Naive thymus-derived CD4-positive, alpha-beta T cell (primary cell): ENCODE measurements at regions of chr11 and their contacts with region 1.

Region 1: DNA sequence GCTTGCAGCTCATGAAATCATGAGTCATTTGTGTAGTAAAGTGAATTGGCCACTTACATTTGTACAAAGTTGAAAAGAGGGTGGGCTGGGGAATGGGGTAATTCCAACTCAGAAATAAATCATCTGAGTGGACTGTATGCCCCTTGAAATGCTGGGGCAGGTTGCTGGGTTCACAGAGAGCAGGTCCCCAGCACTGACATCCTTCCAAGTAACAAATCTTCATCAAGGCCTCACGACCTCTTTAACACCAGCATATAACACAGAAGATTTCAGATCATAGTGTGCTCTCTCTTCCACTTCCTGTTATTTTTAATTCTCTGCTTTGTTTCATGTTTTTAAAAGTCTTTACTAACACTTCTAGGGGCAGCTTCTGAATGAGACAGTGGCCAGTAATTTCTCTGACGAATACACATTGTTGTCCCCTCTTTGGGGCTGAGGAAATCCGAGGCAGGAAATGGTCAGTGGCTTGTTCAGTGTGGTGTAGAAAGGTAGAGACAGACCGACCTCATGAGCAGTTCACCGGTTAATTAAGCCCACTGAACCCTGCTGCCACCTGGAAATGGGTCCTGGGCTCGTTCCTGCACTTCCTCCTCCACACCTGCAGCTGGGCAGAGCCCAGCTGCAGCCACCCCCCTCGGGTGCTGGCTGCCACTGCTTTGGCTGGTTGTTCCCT is 127.7 kb downstream of the MAML2 start:
- DNase-seq: peak in 7 of 9 donors; percentile 25 to 67 (median 62)
- ATAC-seq: peak; percentile 78
- H3K4me3 ChIP-seq: peak overlapping the region; percentile 47
- H3K4me3 Mint-ChIP-seq: peak overlapping the region; percentile 64 to 80 (median 75)
- H3K27ac ChIP-seq: peak overlapping the region; percentile 75
- H3K27ac Mint-ChIP-seq: peak overlapping the region; percentile 89 to 99 (median 96)
- H3K4me1 ChIP-seq: peaks cover 73 to 96% of the 10 kb centered on the region in 2 donors
- H3K4me1 Mint-ChIP-seq: peaks cover 54 to 100% (median 91%) of the 10 kb centered on the region in 7 donors
- H3K27me3 ChIP-seq: no peaks in the 10 kb centered on the region
- H3K27me3 Mint-ChIP-seq: no peaks in the 10 kb centered on the region

Region 2: DNA sequence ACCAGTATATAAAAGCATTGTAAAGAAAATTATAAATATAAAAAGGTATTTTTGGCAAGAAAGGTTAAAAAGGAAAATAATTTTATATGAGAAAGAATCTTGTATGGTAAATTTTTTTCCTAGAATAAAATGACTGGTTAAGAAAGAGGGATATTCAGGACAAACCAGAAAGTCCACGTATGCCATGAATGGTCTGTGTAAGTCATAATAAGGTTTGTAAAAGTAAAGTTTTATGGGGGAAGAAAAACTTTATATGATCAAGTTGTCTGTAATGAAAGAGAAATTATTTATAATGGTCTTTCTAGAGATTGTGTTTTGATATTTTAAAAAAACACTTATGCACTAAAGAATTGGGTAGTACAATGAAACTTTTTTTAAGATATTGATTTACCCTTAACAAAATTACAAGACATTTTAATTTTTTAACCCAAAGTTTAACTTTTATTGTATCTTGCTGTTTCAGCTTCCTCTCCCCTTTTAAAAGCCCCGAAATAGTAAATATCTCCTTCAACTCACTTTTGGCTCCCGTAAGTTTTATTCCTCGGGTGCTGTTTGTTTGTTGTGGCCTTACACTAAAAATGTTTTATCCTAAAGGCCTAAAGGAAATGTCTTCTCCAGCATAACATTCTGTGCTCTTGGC is 1399.4 kb before region 1 on chr11:
- CTCF ChIA-PET with region 1: no interaction called
- POLR2A ChIA-PET with region 1: no interaction called
- intact Hi-C with region 1: no loop called
- DNase-seq: no peak
- ATAC-seq: no peak
- H3K4me3 ChIP-seq: no peak overlapping the region
- H3K4me3 Mint-ChIP-seq: no peak overlapping the region
- H3K27ac ChIP-seq: no peak overlapping the region
- H3K27ac Mint-ChIP-seq: no peak overlapping the region
- H3K4me1 ChIP-seq: no peaks in the 10 kb centered on the region
- H3K4me1 Mint-ChIP-seq: no peaks in the 10 kb centered on the region
- H3K27me3 ChIP-seq: no peaks in the 10 kb centered on the region
- H3K27me3 Mint-ChIP-seq: peaks cover 0 to 7% (median 0%) of the 10 kb centered on the region in 5 donors

Region 3: GRCh38 chr11:96001037-96001436 is 214.2 kb before region 1 on chr11:
- CTCF ChIA-PET with region 1: no interaction called
- POLR2A ChIA-PET with region 1: no interaction called
- intact Hi-C with region 1: no loop called
- DNase-seq: no peak
- ATAC-seq: no peak
- H3K4me3 ChIP-seq: no peak overlapping the region
- H3K4me3 Mint-ChIP-seq: peak overlapping the region in 1 of 10 donors; percentile 45
- H3K27ac ChIP-seq: no peak overlapping the region
- H3K27ac Mint-ChIP-seq: peak overlapping the region in 3 of 9 donors; percentile 1 to 73 (median 25)
- H3K4me1 ChIP-seq: no peaks in the 10 kb centered on the region
- H3K4me1 Mint-ChIP-seq: peaks cover 13 to 84% (median 51%) of the 10 kb centered on the region in 7 donors
- H3K27me3 ChIP-seq: no peaks in the 10 kb centered on the region
- H3K27me3 Mint-ChIP-seq: no peaks in the 10 kb centered on the region

Region 4: DNA sequence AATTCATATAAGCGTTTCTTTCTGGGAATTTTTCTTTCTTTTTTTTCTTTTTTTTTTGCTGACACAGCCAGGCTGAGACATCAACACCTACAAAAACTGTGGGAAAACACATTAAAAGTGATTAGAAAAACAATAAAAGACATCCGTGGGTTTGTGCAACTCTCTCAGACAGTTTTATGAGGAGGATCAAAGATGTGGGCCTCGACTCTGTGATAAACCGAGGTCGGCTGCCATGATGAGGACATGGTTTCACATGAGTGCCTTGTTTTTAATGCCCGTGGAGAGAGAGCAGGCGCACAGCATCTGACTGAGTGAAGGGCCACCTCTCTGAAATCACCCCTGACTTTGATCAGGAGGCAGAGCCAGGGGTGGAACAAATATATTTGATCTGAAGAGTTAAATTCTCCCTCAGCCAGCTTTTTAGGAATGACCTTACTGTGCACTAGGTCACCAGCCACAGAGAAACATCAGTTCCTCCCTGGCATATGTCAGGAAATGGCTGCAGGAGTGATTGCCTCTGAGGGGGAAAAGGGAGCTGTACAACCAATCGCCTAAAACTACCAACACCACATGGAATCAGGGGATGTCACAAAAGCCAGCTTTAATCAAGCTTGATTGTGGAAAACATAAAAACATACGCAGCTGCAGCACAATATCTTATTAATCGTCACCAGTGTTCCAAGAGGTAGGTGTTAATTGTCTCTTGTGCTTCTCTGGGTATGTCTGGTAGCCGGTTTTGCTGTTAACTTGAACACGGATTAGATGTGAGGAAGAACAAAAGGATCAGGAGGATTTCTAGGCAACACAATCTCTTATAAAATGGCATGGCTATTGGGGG is 37.0 kb before region 1 on chr11:
- CTCF ChIA-PET with region 1: no interaction called
- POLR2A ChIA-PET with region 1: no interaction called
- intact Hi-C with region 1: no loop called
- DNase-seq: no peak
- ATAC-seq: no peak
- H3K4me3 ChIP-seq: no peak overlapping the region
- H3K4me3 Mint-ChIP-seq: peak overlapping the region in 7 of 10 donors; percentile 31 to 64 (median 48)
- H3K27ac ChIP-seq: no peak overlapping the region
- H3K27ac Mint-ChIP-seq: peak overlapping the region in 8 of 9 donors; percentile 70 to 87 (median 77)
- H3K4me1 ChIP-seq: peaks cover 3 to 15% of the 10 kb centered on the region in 2 donors
- H3K4me1 Mint-ChIP-seq: peaks cover 27 to 100% (median 97%) of the 10 kb centered on the region in 7 donors
- H3K27me3 ChIP-seq: no peaks in the 10 kb centered on the region
- H3K27me3 Mint-ChIP-seq: no peaks in the 10 kb centered on the region

Region 5: DNA sequence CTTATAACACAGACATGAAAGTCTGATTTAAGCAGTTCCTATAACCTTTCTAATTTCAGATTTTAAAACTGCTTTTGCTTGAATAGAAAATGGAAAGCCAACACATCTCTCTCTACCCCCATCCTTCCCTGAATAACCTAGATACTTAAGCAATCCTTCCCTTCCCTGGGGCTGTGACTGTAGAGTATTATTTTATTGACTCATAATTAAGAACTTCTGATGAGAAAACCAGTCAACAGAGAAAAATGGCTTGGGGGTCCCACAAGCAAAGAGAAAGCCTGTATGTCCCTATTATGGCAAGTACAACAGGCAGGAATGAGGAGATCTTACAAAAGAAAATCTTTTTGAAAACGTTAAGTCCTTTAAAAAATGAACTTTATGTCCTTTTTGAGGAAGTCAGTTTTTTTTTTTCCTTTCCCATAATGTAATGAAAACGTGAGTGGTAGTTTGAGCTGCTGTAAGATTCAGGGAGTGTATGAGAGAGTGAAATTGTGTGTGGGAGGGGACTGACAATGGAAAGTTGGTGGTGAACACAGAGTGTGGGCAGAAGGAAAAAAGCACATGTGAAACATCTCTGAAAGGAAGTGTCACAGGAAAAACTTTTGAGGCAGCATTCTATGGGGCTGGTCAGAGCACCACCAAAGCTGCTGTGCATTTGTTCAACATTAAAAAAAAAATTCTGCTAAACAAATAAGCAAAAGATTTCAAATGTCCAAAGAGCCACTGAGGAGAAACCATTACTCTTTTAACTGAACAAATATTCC is 26.8 kb before region 1 on chr11:
- CTCF ChIA-PET with region 1: no interaction called
- POLR2A ChIA-PET with region 1: interaction called, 14 read pairs
- intact Hi-C with region 1: loop called in 1 of 2 experiments (anchors 2 kb)
- DNase-seq: peak in 2 of 9 donors; percentile 17 to 57
- ATAC-seq: peak; percentile 38
- H3K4me3 ChIP-seq: no peak overlapping the region
- H3K4me3 Mint-ChIP-seq: peak overlapping the region; percentile 42 to 79 (median 72)
- H3K27ac ChIP-seq: peak overlapping the region; percentile 15
- H3K27ac Mint-ChIP-seq: peak overlapping the region; percentile 21 to 90 (median 79)
- H3K4me1 ChIP-seq: peaks cover 9 to 50% of the 10 kb centered on the region in 2 donors
- H3K4me1 Mint-ChIP-seq: peaks cover 35 to 92% (median 88%) of the 10 kb centered on the region in 7 donors
- H3K27me3 ChIP-seq: no peaks in the 10 kb centered on the region
- H3K27me3 Mint-ChIP-seq: no peaks in the 10 kb centered on the region

Region 6: DNA sequence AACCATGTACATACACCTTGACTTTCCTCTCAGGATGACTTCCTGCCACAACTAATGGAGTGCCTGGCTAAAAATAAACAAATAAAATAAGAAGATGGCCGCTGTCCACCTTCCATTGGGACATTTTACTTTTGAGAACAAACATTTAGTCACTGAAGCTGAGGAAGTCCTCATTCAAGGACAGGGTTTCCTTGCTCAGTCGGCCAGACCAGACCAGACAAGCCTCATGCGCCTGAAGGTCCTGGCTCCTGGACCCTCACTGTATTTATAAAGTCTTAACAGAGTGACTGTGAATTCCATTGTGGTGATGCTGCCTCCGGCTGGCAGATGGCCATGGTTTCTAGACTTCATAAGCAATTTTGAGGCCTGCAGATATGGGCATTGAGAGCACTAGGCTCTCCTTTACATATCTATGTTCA is 13.2 kb after region 1 on chr11:
- CTCF ChIA-PET with region 1: interaction called, 4 read pairs
- POLR2A ChIA-PET with region 1: interaction called, 7 read pairs
- intact Hi-C with region 1: loop called in 1 of 2 experiments (anchors 1 kb)
- DNase-seq: no peak
- ATAC-seq: no peak
- H3K4me3 ChIP-seq: no peak overlapping the region
- H3K4me3 Mint-ChIP-seq: peak overlapping the region in 7 of 10 donors; percentile 13 to 83 (median 57)
- H3K27ac ChIP-seq: peak overlapping the region; percentile 43
- H3K27ac Mint-ChIP-seq: peak overlapping the region in 7 of 9 donors; percentile 63 to 92 (median 87)
- H3K4me1 ChIP-seq: peaks cover 0 to 42% of the 10 kb centered on the region in 2 donors
- H3K4me1 Mint-ChIP-seq: peaks cover 43 to 96% (median 85%) of the 10 kb centered on the region in 7 donors
- H3K27me3 ChIP-seq: no peaks in the 10 kb centered on the region
- H3K27me3 Mint-ChIP-seq: no peaks in the 10 kb centered on the region

Region 7: GRCh38 chr11:96242971-96243647 is 27.9 kb after region 1 on chr11:
- CTCF ChIA-PET with region 1: interaction called, 3 read pairs
- POLR2A ChIA-PET with region 1: interaction called, 16 read pairs
- intact Hi-C with region 1: no loop called
- DNase-seq: peak; percentile 47 to 83 (median 66)
- ATAC-seq: peak; percentile 92
- H3K4me3 ChIP-seq: peak overlapping the region; percentile 63
- H3K4me3 Mint-ChIP-seq: peak overlapping the region; percentile 76 to 89 (median 84)
- H3K27ac ChIP-seq: peak overlapping the region; percentile 72
- H3K27ac Mint-ChIP-seq: peak overlapping the region; percentile 86 to 94 (median 92)
- H3K4me1 ChIP-seq: peaks cover 8 to 61% of the 10 kb centered on the region in 2 donors
- H3K4me1 Mint-ChIP-seq: peaks cover 37 to 72% (median 63%) of the 10 kb centered on the region in 7 donors
- H3K27me3 ChIP-seq: no peaks in the 10 kb centered on the region
- H3K27me3 Mint-ChIP-seq: no peaks in the 10 kb centered on the region

Region 8: GRCh38 chr11:96272529-96273222 is 57.4 kb after region 1 on chr11:
- CTCF ChIA-PET with region 1: no interaction called
- POLR2A ChIA-PET with region 1: no interaction called
- intact Hi-C with region 1: no loop called
- DNase-seq: peak in 7 of 9 donors; percentile 37 to 74 (median 65)
- ATAC-seq: peak; percentile 87
- H3K4me3 ChIP-seq: no peak overlapping the region
- H3K4me3 Mint-ChIP-seq: peak overlapping the region in 3 of 10 donors; percentile 6 to 60 (median 24)
- H3K27ac ChIP-seq: peak overlapping the region; percentile 69
- H3K27ac Mint-ChIP-seq: peak overlapping the region in 8 of 9 donors; percentile 66 to 100 (median 90)
- H3K4me1 ChIP-seq: peaks cover 6 to 15% of the 10 kb centered on the region in 2 donors
- H3K4me1 Mint-ChIP-seq: peaks cover 16 to 82% (median 76%) of the 10 kb centered on the region in 7 donors
- H3K27me3 ChIP-seq: no peaks in the 10 kb centered on the region
- H3K27me3 Mint-ChIP-seq: no peaks in the 10 kb centered on the region